Esophagus muscularis mucosa (tissue), 4 donors: ENCODE measurements at regions of chr20 and their contacts with region 1.

Region 1: DNA sequence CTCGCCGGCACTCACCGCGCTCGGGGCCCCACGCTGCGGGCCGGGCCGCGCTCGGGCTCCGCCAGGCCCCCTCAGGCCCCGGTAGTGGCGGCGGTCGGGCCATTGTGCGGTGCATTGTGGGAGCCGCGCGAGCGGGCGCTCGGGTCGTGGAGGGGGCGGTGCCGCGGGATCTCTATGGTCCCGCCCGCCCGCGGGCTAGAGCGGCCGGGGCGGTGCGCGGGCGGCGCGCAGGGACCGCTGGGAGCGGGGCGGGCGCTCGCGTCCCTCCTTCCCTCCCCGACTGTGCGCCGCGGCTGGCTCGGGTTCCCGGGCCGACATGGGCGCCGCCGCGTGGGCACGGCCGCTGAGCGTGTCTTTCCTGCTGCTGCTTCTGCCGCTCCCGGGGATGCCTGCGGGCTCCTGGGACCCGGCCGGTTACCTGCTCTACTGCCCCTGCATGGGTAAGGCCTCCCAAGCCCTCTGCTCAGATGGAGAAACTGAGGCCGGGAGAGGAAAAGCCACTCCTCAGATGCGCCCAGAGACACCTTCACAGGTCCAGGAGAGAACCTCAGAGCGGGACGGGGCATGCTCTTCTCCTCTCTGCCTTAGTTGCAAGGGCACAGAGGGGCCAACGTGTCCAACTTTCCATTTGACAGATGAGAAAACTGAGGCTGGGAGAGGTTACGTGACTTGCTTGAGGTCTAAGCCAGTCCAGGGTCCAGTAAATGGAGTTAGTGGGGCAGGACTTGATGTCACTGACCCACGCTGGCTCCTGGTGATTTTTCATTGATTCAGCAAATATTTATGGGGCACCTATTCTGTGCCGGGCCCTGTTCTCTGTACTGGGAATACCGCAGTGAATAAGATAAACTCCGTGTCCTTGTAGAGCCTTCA is at the starts of genes PLAGL2 and POFUT1:
- DNase-seq: peak; percentile 93
- H3K4me3 ChIP-seq: peak within 1 kb of the TSS; percentile 94 to 99 (median 97)
- H3K27ac ChIP-seq: peak within 1 kb of the TSS; percentile 88 to 92 (median 91)
- H3K4me1 ChIP-seq: peaks cover 45 to 69% (median 60%) of the 10 kb centered on the region in 4 donors
- H3K27me3 ChIP-seq: no peaks in the 10 kb centered on the region
- CTCF ChIP-seq: peak; percentile 32 to 44 (median 42)
- EP300 ChIP-seq: no peak
- POLR2A ChIP-seq: no peak
- total RNA-seq, gene PLAGL2: 5.4 to 10.8 (median 8.0) TPM
- total RNA-seq, gene POFUT1: 21.7 to 31.9 (median 29.8) TPM

Region 2: DNA sequence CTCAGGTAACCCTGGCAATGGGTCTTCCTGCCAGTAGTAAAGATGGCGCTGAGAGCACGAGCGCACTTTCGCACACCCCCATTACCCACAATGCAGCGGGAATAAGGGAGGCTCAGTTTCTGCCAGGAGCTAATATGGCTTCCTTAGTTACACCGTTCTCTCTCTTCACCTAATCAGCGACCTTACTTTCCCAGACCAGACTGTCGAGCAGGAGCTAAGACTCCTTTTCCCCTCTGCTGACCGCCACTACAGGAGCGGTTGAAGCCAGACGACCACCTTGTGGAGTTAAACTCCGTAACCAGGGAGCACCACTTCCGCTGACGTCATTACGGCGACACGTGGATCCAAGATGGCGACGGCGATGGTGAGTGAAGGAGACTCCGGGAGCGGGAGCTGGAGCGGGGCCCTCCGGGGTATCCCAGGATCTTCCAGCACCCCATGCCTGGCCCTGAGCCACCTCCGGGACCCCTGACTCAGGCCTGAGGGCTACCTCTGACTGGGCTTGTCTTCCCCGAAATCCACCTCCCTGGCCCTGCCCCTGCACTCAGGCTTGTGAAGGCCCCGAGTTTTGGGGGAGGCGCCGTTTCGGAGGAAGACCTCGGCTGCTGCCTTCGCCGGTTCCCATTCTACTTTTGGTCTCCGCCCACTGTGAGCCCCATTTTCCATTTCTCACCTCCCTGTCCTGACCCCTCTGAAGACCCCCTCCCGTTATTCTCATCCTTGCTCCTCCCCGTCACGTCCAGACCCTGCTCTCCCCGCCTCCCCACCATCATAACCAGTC is 98.3 kb before region 1 on chr20 and contains the start of gene TM9SF4:
- intact Hi-C with region 1: loop called (anchors 5 kb)
- DNase-seq: peak; percentile 98
- H3K4me3 ChIP-seq: peak within 1 kb of the TSS; percentile 72 to 99 (median 88)
- H3K27ac ChIP-seq: peak within 1 kb of the TSS; percentile 96 to 99 (median 97)
- H3K4me1 ChIP-seq: peaks cover 24 to 46% (median 44%) of the 10 kb centered on the region in 4 donors
- H3K27me3 ChIP-seq: no peaks in the 10 kb centered on the region
- CTCF ChIP-seq: no peak
- EP300 ChIP-seq: no peak
- POLR2A ChIP-seq: no peak
- total RNA-seq, gene TM9SF4: 19.9 to 34.4 (median 25.2) TPM

Region 3: GRCh38 chr20:32277361-32278198 is 69.7 kb after region 1 on chr20 and contains the start of gene KIF3B:
- intact Hi-C with region 1: loop called (anchors 5 kb)
- DNase-seq: peak; percentile 96
- H3K4me3 ChIP-seq: peak within 1 kb of the TSS; percentile 95 to 96 (median 96)
- H3K27ac ChIP-seq: peak within 1 kb of the TSS; percentile 84 to 87 (median 86)
- H3K4me1 ChIP-seq: peaks cover 16 to 44% (median 29%) of the 10 kb centered on the region in 4 donors
- H3K27me3 ChIP-seq: peaks cover 0 to under 1% (median 0%) of the 10 kb centered on the region in 4 donors
- CTCF ChIP-seq: no peak
- EP300 ChIP-seq: no peak
- POLR2A ChIP-seq: no peak
- total RNA-seq, gene KIF3B: 20.7 to 28.3 (median 23.5) TPM

Region 4: GRCh38 chr20:32357869-32358631 is 150.2 kb after region 1 on chr20 and contains the start of gene ASXL1:
- intact Hi-C with region 1: loop called (anchors 5 kb)
- DNase-seq: peak; percentile 98
- H3K4me3 ChIP-seq: peak within 1 kb of the TSS; percentile 86 to 98 (median 90)
- H3K27ac ChIP-seq: peak within 1 kb of the TSS; percentile 95 to 98 (median 97)
- H3K4me1 ChIP-seq: peaks cover 28 to 73% (median 57%) of the 10 kb centered on the region in 4 donors
- H3K27me3 ChIP-seq: no peaks in the 10 kb centered on the region
- CTCF ChIP-seq: no peak
- EP300 ChIP-seq: no peak
- POLR2A ChIP-seq: no peak
- total RNA-seq, gene ASXL1: 56.5 to 66.7 (median 61.8) TPM

Region 5: GRCh38 chr20:32484958-32485769 is 277.3 kb after region 1 on chr20:
- intact Hi-C with region 1: loop called (anchors 10 kb)
- DNase-seq: no peak
- H3K4me3 ChIP-seq: peak overlapping the region; percentile 78 to 95 (median 92)
- H3K27ac ChIP-seq: peak overlapping the region; percentile 81 to 94 (median 89)
- H3K4me1 ChIP-seq: peaks cover 26 to 45% (median 41%) of the 10 kb centered on the region in 4 donors
- H3K27me3 ChIP-seq: no peaks in the 10 kb centered on the region
- CTCF ChIP-seq: peak; percentile 86 to 91 (median 86)
- EP300 ChIP-seq: no peak
- POLR2A ChIP-seq: no peak

Region 6: GRCh38 chr20:33005132-33005566 is 797.3 kb after region 1 on chr20:
- intact Hi-C with region 1: no loop called
- DNase-seq: no peak
- H3K4me3 ChIP-seq: no peak overlapping the region
- H3K27ac ChIP-seq: no peak overlapping the region
- H3K4me1 ChIP-seq: no peaks in the 10 kb centered on the region
- H3K27me3 ChIP-seq: no peaks in the 10 kb centered on the region
- CTCF ChIP-seq: peak in 2 of 3 experiments; percentile 9 to 15
- EP300 ChIP-seq: no peak
- POLR2A ChIP-seq: no peak